ENCODE measurements at regions of chr5 and their contacts with region 1.

Region 1: GRCh38 chr5:140107312-140108083 is 6.4 kb upstream of the PURA start:
- DNase-seq: peak; percentile 93
- ATAC-seq: peak; percentile 90
- H3K4me3 ChIP-seq: peak overlapping the region; percentile 95
- H3K27ac ChIP-seq: peak overlapping the region; percentile 68
- H3K4me1 ChIP-seq: peaks cover 17% of the 10 kb centered on the region
- H3K27me3 ChIP-seq: no peaks in the 10 kb centered on the region
- CTCF ChIP-seq: peak; percentile 24

Region 2: DNA sequence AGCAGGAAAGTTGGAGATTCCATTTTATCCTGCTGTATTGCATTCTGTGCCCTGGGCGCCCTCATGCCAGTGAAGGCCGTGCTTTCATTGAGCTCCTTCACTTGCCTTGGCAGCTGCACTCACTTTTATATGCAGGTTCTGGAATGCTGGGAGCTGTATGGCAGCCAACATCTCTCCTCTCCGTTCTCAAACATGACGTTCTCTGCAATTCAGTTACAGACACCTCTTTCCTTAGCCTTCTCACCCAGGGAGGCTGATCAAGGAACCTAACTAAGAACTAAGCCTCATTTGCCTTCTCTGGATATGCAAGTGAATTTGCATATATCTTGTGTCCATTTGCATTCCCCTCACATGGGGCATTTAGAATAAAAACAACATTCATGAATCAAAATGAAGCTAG is 23.0 kb before region 1 on chr5:
- CTCF ChIA-PET with region 1: no interaction called
- POLR2A ChIA-PET with region 1: no interaction called
- intact Hi-C with region 1: no loop called
- DNase-seq: no peak
- ATAC-seq: no peak; the same call in 1 of the 2 replicates
- H3K4me3 ChIP-seq: no peak overlapping the region
- H3K27ac ChIP-seq: no peak overlapping the region
- H3K4me1 ChIP-seq: no peaks in the 10 kb centered on the region
- H3K27me3 ChIP-seq: peaks cover 39% of the 10 kb centered on the region
- CTCF ChIP-seq: no peak

Region 3: GRCh38 chr5:140401362-140402257 is 294.1 kb after region 1 on chr5 and contains the start of gene ANKHD1:
- CTCF ChIA-PET with region 1: no interaction called
- POLR2A ChIA-PET with region 1: no interaction called
- intact Hi-C with region 1: loop called (anchors 5 kb)
- DNase-seq: peak; percentile 100
- ATAC-seq: peak; percentile 73
- H3K4me3 ChIP-seq: peak within 1 kb of the TSS; percentile 97
- H3K27ac ChIP-seq: peak within 1 kb of the TSS; percentile 79
- H3K4me1 ChIP-seq: peaks cover 30% of the 10 kb centered on the region
- H3K27me3 ChIP-seq: no peaks in the 10 kb centered on the region
- CTCF ChIP-seq: no peak
- total RNA-seq, gene ANKHD1: 64.6 and 81.1 TPM in 2 replicates

Measured in PC-3 (cell line).